OCI-LY7 (cell line): ENCODE measurements at regions of chr10 and their contacts with region 1.

Region 1: DNA sequence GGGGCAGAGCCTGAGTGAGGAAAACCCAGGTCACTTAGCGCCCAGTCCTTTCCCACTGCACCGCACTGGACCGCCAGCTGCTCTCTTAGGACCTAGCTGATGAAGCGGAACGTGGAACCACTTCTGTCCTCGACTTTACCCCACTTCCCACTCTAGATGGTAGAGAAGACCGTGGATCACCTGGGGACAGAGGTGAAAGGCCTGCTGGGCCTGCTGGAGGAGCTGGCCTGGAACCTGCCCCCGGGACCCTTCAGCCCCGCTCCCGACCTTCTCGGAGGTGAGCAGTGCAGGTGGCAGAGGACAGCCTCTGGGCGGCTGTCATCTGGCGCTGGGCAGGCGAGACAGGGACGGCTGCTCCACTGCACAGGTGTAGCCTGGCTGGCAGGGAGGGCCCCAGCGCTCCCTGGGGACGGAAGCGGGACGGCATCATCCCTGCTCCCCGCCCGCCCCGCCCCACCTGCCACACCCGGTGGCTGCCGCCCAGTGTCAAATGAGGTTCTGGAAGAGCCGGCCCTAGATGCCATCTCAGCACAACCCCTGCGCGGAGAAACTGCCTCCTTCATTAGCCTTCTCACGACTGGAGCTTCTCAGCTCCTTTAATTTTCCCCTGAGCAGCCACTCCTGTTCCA is 11.7 kb downstream of the PLAC9 start:
- DNase-seq: peak; percentile 67
- H3K4me3 ChIP-seq: peak overlapping the region; percentile 43
- H3K27ac ChIP-seq: no peak overlapping the region
- H3K4me1 ChIP-seq: peaks cover 23% of the 10 kb centered on the region
- CTCF ChIP-seq: no peak; the same call in 1 of the 2 replicates

Region 2: GRCh38 chr10:78995987-78996791 is 1148.0 kb before region 1 on chr10:
- CTCF ChIA-PET with region 1: interaction called, 10 read pairs
- POLR2A ChIA-PET with region 1: no interaction called
- intact Hi-C with region 1: no loop called
- DNase-seq: peak; percentile 38
- H3K4me3 ChIP-seq: peak overlapping the region; percentile 46
- H3K27ac ChIP-seq: no peak overlapping the region
- H3K4me1 ChIP-seq: peaks cover 59% of the 10 kb centered on the region
- CTCF ChIP-seq: no peak

Region 3: GRCh38 chr10:80158598-80159127 is 14.5 kb after region 1 on chr10:
- CTCF ChIA-PET with region 1: no interaction called
- POLR2A ChIA-PET with region 1: no interaction called
- intact Hi-C with region 1: no loop called
- DNase-seq: no peak
- H3K4me3 ChIP-seq: no peak overlapping the region
- H3K27ac ChIP-seq: no peak overlapping the region
- H3K4me1 ChIP-seq: no peaks in the 10 kb centered on the region
- CTCF ChIP-seq: no peak